Upper lobe of right lung (tissue), 1 donor: ENCODE measurements at regions of chr12 and their contacts with region 1.

Region 1: GRCh38 chr12:89051065-89051677 is 301.1 kb downstream of the DUSP6 start:
- DNase-seq: no peak
- ATAC-seq: peak; percentile 90
- H3K4me3 ChIP-seq: no peak overlapping the region
- H3K27ac ChIP-seq: no peak overlapping the region
- H3K4me1 ChIP-seq: no peaks in the 10 kb centered on the region
- H3K27me3 ChIP-seq: no peaks in the 10 kb centered on the region
- CTCF ChIP-seq: peak; percentile 97

Region 2: DNA sequence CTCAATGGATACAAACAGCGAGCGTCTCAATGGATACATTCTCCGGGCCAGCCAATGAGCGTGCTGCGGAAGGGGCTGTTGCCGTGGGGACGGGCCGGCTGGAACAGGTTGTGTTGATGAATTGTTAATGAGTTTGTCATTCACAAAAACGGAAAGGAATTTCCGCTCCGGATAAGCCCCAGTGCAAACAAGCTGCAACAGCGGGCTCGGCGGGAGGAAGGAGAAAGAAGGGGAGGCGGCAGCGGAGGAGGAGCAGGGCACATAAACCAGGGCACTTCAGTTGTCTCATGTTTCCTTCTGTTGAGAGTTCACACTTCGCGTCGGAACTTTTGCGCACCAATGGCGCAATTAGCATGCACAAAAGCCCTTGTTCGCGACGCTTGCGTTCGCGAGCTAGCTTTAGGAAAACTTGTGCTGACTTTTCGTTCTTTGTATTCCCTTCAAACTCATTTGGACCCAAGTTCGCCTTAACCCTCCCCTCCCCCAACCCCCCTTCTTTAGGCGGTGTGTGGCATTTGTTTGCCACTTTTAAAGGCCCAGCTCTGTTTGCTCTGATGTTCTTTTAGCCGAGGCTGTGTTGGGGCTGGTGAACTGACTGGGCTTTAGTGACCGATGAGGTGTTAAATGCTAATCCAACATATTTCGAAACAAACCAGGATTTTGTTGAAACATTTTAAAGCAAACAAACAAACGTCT is 301.5 kb after region 1 on chr12 and contains the start of gene DUSP6:
- intact Hi-C with region 1: loop called (anchors 10 kb)
- DNase-seq: peak; percentile 97
- ATAC-seq: peak; percentile 76
- H3K4me3 ChIP-seq: peak within 1 kb of the TSS; percentile 72
- H3K27ac ChIP-seq: peak within 1 kb of the TSS; percentile 99
- H3K4me1 ChIP-seq: peaks cover 37% of the 10 kb centered on the region
- H3K27me3 ChIP-seq: no peaks in the 10 kb centered on the region
- CTCF ChIP-seq: no peak
- total RNA-seq, gene DUSP6: 110 TPM

Region 3: DNA sequence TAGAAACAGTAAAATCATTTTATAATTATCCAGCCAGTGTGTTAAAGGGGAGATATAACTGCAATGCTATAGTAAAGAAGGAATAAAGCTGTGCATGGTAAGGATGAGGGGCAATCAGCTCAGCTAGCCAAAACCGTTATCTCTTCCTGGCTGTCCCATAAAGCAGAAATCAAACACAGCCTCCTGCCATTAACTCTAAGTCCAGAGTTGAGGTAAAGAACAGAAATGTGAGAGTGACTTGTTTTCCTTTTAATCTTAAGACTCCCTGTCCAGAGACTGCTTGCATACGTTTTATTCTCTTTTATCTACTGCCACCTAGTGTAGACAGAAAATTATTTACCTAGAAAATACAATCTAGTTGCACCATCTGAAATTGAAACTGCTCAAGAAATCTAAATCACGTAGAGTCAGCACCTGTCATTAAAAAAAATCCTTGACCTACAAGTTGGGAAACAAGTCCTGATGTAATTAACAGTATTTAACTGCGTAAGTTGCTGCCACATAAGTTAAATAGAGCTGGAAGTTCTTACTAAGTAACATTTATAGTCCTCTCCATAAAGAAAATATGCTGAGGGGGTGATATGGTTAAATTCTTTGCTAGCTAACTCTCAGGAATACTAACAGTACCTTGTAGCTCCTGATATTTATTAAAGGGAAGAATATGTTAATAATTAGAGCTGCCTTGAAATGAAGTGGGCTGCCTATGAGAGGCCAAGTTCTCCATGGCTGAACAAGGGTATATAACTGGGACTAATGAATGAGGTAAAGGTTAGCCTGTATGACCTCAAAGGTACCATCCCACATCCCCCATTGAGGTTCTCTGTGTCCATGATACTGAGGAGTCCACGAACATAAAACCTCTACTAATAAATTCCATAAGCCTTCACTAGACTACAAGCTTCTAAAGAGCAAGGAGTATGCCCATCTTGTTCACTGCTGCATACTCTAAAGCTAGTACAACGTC is 410.8 kb after region 1 on chr12:
- intact Hi-C with region 1: loop called (anchors 5 kb)
- DNase-seq: no peak
- ATAC-seq: peak; percentile 95
- H3K4me3 ChIP-seq: peak overlapping the region; percentile 11
- H3K27ac ChIP-seq: peak overlapping the region; percentile 61
- H3K4me1 ChIP-seq: peaks cover 6% of the 10 kb centered on the region
- H3K27me3 ChIP-seq: no peaks in the 10 kb centered on the region
- CTCF ChIP-seq: peak; percentile 62